HAP-1 (cell line): ENCODE measurements at regions of chr20 and their contacts with region 1.

Region 1: DNA sequence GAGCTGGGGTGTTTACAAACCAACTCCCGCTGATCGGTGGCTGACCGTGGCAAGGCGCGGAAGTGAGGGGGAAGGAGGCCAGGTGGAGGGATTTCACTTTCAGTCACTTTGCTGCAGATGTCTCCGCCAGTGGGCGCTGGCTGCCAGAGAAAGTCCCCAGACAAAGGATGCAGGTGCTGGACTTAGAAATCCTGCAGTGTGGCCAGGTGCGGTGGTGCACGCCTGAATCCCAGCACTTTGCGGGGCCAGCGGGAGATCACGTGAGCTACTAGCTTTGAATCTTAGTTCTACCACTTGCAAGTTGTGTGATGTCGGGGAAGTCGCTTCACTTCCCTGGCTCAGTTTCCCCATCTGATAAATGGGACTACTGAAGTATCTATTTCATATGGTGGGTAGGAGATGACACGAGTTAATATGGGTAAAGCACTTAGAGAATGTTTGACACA is 180.4 kb downstream of the ZNF217 start:
- DNase-seq: peak; percentile 38 to 64
- H3K4me3 ChIP-seq: no peak overlapping the region
- H3K4me1 ChIP-seq: no peaks in the 10 kb centered on the region
- H3K27me3 ChIP-seq: no peaks in the 10 kb centered on the region

Region 2: DNA sequence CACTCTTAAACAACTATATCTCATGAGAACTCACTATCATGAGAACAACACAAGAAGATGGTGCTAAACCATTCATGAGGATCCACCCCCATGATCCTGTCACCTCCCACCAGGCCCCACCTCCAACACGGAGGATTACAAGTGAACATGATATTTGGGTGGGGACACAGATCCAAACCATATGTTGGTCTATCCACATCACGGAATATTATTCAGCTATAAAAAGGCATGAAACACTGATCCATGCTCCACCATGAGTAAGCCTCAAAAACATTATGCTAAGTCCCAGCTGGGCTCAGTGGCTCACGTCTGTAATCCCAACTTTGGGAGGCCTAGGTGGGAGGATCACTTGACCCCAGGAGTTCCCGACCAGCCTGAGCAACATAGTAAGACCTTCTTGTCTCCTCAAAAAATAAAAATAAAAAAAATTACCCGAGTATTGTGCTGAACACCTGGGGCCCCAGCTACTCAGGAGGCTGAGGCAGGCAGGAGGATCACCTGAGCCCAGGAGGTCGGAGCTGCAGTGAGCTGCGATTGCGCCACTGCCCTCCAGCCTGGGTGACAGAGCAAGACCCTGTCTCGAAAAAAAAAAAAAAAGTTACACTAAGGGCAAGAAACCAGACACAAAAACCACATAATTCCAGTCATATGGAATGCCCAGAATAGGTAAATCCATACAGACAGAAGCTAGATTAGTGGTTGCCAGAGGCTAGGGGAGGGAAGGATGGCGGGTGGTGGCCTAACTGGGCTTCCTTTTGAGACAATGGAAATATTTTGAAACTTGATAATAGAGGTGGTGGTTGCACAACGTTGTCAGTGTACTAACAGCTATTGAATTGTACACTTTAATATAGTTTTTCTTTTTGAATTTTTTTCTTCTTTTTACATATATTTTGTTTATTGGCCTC is 137.3 kb after region 1 on chr20:
- in situ Hi-C with region 1: loop called (anchors 5 kb)
- DNase-seq: peak in 1 of 2 experiments; percentile 25
- H3K4me3 ChIP-seq: no peak overlapping the region
- H3K4me1 ChIP-seq: no peaks in the 10 kb centered on the region
- H3K27me3 ChIP-seq: no peaks in the 10 kb centered on the region

Region 3: GRCh38 chr20:53939572-53940359 is 526.6 kb after region 1 on chr20:
- in situ Hi-C with region 1: loop called (anchors 10 kb)
- DNase-seq: peak; percentile 88 to 93
- H3K4me3 ChIP-seq: no peak overlapping the region
- H3K4me1 ChIP-seq: peaks cover 24% of the 10 kb centered on the region
- H3K27me3 ChIP-seq: no peaks in the 10 kb centered on the region